ENCODE measurements at regions of chr7 and their contacts with region 1.

Region 1: GRCh38 chr7:106041140-106041717 is 70.9 kb downstream of the SYPL1 start:
- DNase-seq: peak; percentile 35
- H3K4me3 Mint-ChIP-seq: no peak overlapping the region
- H3K27ac Mint-ChIP-seq: no peak overlapping the region
- H3K4me1 Mint-ChIP-seq: peaks cover 7% of the 10 kb centered on the region
- H3K27me3 Mint-ChIP-seq: peaks cover 32% of the 10 kb centered on the region

Region 2: GRCh38 chr7:106022193-106022821 is 18.9 kb before region 1 on chr7:
- CTCF ChIA-PET with region 1: interaction called, 13 read pairs
- POLR2A ChIA-PET with region 1: interaction called, 5 read pairs
- DNase-seq: peak; percentile 81
- H3K4me3 Mint-ChIP-seq: peak overlapping the region; percentile 34
- H3K27ac Mint-ChIP-seq: peak overlapping the region; percentile 67
- H3K4me1 Mint-ChIP-seq: peaks cover 43% of the 10 kb centered on the region
- H3K27me3 Mint-ChIP-seq: peaks cover 46% of the 10 kb centered on the region

Region 3: DNA sequence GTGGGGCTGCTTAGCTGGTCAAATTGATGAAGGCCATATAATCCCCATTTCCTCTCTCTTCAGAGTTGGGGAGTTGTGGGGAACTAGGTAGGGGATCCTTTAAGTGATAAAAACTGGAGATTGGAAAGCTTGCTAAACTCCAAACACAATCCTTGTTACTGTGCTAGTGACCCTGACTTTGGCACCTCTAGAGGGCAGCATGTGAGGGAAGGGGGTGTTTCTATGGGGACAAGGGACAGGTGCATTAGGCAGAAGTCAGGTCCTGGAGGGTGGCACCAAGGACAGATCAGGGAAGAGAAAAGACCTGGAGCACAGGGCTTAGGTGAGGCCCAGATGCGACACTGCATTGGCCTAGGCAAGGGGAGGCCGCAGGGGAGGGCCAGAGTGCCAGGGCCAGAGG is 11.3 kb before region 1 on chr7:
- CTCF ChIA-PET with region 1: interaction called, 17 read pairs
- POLR2A ChIA-PET with region 1: no interaction called
- DNase-seq: no peak
- H3K4me3 Mint-ChIP-seq: no peak overlapping the region
- H3K27ac Mint-ChIP-seq: no peak overlapping the region
- H3K4me1 Mint-ChIP-seq: no peaks in the 10 kb centered on the region
- H3K27me3 Mint-ChIP-seq: peaks cover 37% of the 10 kb centered on the region

Region 4: DNA sequence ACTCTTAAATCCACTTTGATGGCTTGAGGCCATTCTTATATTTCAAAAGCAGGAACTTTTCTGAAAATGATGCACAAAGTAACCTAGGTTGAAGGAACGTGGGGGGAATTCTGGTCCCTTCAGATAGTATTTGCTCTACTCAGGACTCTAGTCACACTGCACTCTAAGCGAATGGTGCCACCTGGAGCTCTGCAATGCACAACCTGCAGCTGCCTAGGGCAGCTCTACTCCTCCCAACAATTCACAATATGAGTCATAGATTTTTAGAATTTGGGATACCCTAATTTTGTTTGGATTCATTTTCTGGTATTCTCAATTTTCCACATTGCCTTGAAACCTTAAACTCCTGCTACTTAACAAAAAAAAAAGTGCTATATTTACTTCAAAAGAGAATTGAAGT is 53.6 kb after region 1 on chr7:
- CTCF ChIA-PET with region 1: no interaction called
- POLR2A ChIA-PET with region 1: no interaction called
- DNase-seq: no peak
- H3K4me3 Mint-ChIP-seq: no peak overlapping the region
- H3K27ac Mint-ChIP-seq: no peak overlapping the region
- H3K4me1 Mint-ChIP-seq: peaks cover 12% of the 10 kb centered on the region
- H3K27me3 Mint-ChIP-seq: no peaks in the 10 kb centered on the region

Measured in activated CD4-positive, alpha-beta memory T cell treated with anti-CD3 and anti-CD28 coated beads, Interleukin-2, amount 10 ng/mL, durations not matched to agents 7 days and 5 days (primary cell).